Caco-2 (cell line): ENCODE measurements at regions of chr6 and their contacts with region 1.

Region 1: GRCh38 chr6:107230024-107230423 is 114.7 kb upstream of the BEND3 start:
- DNase-seq: peak in 1 of 2 experiments; percentile 19
- H3K4me3 ChIP-seq: no peak overlapping the region
- H3K4me3 Mint-ChIP-seq: no peak overlapping the region
- H3K27ac Mint-ChIP-seq: peak overlapping the region; percentile 30
- H3K4me1 ChIP-seq: peaks cover 25% of the 10 kb centered on the region
- H3K4me1 Mint-ChIP-seq: peaks cover 29% of the 10 kb centered on the region
- H3K27me3 ChIP-seq: no peaks in the 10 kb centered on the region
- H3K27me3 Mint-ChIP-seq: no peaks in the 10 kb centered on the region
- CTCF ChIP-seq: no peak

Region 2: GRCh38 chr6:107102414-107102990 is 127.5 kb before region 1 on chr6:
- CTCF ChIA-PET with region 1: no interaction called
- POLR2A ChIA-PET with region 1: no interaction called
- intact Hi-C with region 1: no loop called
- DNase-seq: no peak
- H3K4me3 ChIP-seq: no peak overlapping the region
- H3K4me3 Mint-ChIP-seq: no peak overlapping the region
- H3K27ac Mint-ChIP-seq: no peak overlapping the region
- H3K4me1 ChIP-seq: no peaks in the 10 kb centered on the region
- H3K4me1 Mint-ChIP-seq: no peaks in the 10 kb centered on the region
- H3K27me3 ChIP-seq: no peaks in the 10 kb centered on the region
- H3K27me3 Mint-ChIP-seq: no peaks in the 10 kb centered on the region
- CTCF ChIP-seq: no peak

Region 3: GRCh38 chr6:107275330-107275865 is 45.4 kb after region 1 on chr6:
- CTCF ChIA-PET with region 1: no interaction called
- POLR2A ChIA-PET with region 1: no interaction called
- intact Hi-C with region 1: loop called (anchors 2 kb)
- DNase-seq: peak; percentile 74 to 89
- H3K4me3 ChIP-seq: peak overlapping the region; percentile 11; the same call in 1 of the 2 replicates
- H3K4me3 Mint-ChIP-seq: peak overlapping the region; percentile 73
- H3K27ac Mint-ChIP-seq: peak overlapping the region; percentile 87
- H3K4me1 ChIP-seq: peaks cover 16% of the 10 kb centered on the region
- H3K4me1 Mint-ChIP-seq: peaks cover 13% of the 10 kb centered on the region
- H3K27me3 ChIP-seq: no peaks in the 10 kb centered on the region
- H3K27me3 Mint-ChIP-seq: no peaks in the 10 kb centered on the region
- CTCF ChIP-seq: no peak